Calu3 (cell line): ENCODE measurements at regions of chr3 and their contacts with region 1.

Region 1: GRCh38 chr3:149553781-149554451 is 79.4 kb downstream of the TM4SF4 start:
- DNase-seq: peak; percentile 62
- H3K4me3 Mint-ChIP-seq: peak overlapping the region; percentile 51
- H3K27ac Mint-ChIP-seq: peak overlapping the region; percentile 96
- H3K4me1 Mint-ChIP-seq: peaks cover 81% of the 10 kb centered on the region
- H3K27me3 Mint-ChIP-seq: no peaks in the 10 kb centered on the region
- CTCF ChIP-seq: no peak

Region 2: DNA sequence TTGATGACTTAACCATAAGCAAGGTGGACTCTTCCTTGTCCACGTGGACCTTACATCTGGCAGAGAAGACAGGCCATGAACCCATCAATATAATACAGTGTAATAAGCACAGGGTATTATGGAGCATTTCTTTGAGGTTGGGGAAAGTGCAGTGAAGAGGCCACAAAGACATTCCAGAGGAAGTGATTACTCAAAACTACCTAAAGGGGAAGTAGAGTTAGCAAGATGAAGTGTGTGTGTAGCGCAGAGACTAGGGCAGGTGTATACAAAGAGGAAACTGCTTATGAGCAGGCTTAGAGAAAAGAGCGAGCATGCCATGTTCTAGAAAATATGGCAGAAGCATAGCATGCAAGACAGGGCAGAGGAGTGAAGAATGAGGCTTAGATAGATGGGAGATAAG is 350.2 kb before region 1 on chr3:
- CTCF ChIA-PET with region 1: no interaction called
- intact Hi-C with region 1: no loop called
- DNase-seq: no peak
- H3K4me3 Mint-ChIP-seq: no peak overlapping the region
- H3K27ac Mint-ChIP-seq: no peak overlapping the region
- H3K4me1 Mint-ChIP-seq: peaks cover 32% of the 10 kb centered on the region
- H3K27me3 Mint-ChIP-seq: no peaks in the 10 kb centered on the region
- CTCF ChIP-seq: no peak

Region 3: DNA sequence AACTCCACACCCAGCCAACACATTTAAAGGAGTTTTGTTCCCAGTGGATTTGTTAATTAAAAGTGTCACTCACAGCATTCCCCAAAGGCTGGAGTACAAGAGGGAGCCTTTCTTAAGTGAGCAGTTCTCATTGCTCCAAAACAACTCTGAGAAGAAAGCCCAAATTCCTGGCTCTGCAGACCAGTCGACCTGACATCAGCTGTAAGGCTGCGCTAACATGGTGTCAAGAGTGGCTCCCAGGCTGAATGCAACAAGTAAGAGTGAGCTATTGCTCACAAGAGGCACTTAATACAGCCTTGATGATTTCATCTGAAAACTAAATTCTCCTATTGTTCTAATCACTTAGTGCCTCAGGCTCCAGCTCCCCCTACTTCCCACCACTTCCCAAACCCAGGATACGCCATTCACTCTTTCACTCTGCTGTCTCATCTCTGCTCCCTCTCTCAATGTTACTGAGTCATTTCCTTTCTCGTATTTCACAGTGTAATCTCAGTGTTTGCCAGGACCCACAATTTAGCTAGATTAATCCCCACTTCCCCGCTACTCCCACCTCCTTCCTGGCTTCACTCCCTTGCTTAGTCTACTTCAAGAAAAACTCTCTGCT is 22.1 kb after region 1 on chr3:
- CTCF ChIA-PET with region 1: interaction called, 10 read pairs
- intact Hi-C with region 1: no loop called
- DNase-seq: peak; percentile 61
- H3K4me3 Mint-ChIP-seq: peak overlapping the region; percentile 32
- H3K27ac Mint-ChIP-seq: peak overlapping the region; percentile 92
- H3K4me1 Mint-ChIP-seq: peaks cover 98% of the 10 kb centered on the region
- H3K27me3 Mint-ChIP-seq: no peaks in the 10 kb centered on the region
- CTCF ChIP-seq: no peak

Region 4: GRCh38 chr3:149581681-149582370 is 27.9 kb after region 1 on chr3:
- CTCF ChIA-PET with region 1: interaction called, 8 read pairs
- intact Hi-C with region 1: loop called (anchors 2 kb)
- DNase-seq: peak; percentile 87
- H3K4me3 Mint-ChIP-seq: peak overlapping the region; percentile 53
- H3K27ac Mint-ChIP-seq: peak overlapping the region; percentile 77
- H3K4me1 Mint-ChIP-seq: peaks cover 87% of the 10 kb centered on the region
- H3K27me3 Mint-ChIP-seq: no peaks in the 10 kb centered on the region
- CTCF ChIP-seq: no peak

Region 5: GRCh38 chr3:149706905-149707304 is 153.0 kb after region 1 on chr3:
- CTCF ChIA-PET with region 1: no interaction called
- intact Hi-C with region 1: no loop called
- DNase-seq: no peak
- H3K4me3 Mint-ChIP-seq: no peak overlapping the region
- H3K27ac Mint-ChIP-seq: no peak overlapping the region
- H3K4me1 Mint-ChIP-seq: no peaks in the 10 kb centered on the region
- H3K27me3 Mint-ChIP-seq: no peaks in the 10 kb centered on the region
- CTCF ChIP-seq: no peak